ENCODE measurements at regions of chr5 and their contacts with region 1.

Region 1: DNA sequence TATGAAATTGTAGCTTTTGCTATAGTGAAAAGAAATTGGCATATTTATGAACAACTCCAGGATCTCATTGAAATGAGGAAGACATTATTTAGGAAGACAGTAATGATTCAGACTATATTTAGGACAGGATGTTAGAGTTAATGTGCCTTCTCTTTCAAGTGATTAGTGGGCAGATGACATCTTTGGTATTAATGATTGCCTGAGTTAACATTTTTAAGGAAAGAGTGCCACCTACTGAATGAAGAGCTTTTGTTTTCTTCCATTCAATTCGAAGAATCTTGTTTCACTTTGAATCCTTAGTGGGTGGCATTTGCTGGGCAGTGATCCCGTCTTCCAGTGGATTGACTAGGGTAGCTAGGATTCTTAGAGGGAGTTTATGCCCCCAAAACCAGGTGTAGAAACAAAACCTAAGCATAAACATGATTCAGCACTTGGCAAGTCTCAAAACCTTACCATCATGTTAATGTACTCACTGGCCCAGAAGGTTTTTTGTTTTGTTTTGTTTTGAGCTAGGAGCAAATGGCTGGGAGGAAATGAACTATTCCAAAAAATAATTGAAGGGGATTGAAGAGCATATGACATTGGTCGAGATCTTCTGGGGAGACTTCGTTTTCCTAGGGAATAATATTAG is 23.2 kb downstream of the MAP3K1 start:
- DNase-seq: peak in 1 of 2 donors; percentile 77
- ATAC-seq: peak; percentile 76 to 84 (median 76)
- H3K4me3 ChIP-seq: no peak overlapping the region
- H3K4me3 Mint-ChIP-seq: peak overlapping the region; percentile 14
- H3K27ac ChIP-seq: peak overlapping the region; percentile 41
- H3K27ac Mint-ChIP-seq: peak overlapping the region; percentile 88 to 91
- H3K4me1 ChIP-seq: peaks cover 10% of the 10 kb centered on the region
- H3K4me1 Mint-ChIP-seq: peaks cover 71 to 89% of the 10 kb centered on the region in 2 donors
- H3K27me3 ChIP-seq: no peaks in the 10 kb centered on the region
- H3K27me3 Mint-ChIP-seq: no peaks in the 10 kb centered on the region
- CTCF ChIP-seq: peak; percentile 63

Region 2: DNA sequence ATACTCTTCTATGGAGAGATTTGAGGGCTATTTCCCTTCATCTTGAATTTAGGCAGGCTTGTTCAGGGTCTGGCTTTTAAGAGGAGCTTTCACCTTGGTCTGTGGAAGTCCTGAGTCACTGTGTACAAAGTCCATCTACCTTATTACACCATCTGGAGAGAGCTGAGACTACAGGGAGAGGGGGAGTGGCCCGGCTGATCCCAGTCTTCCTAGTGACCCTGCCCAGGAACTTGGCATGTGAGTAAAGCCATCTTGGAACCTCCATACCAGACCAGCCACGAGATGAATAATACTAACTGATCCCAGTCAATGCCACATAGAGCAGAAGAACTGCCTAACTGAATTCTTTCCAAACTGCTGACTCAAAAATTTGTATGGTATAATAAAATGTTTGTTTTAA is 835.3 kb before region 1 on chr5:
- intact Hi-C with region 1: no loop called
- DNase-seq: no peak
- ATAC-seq: no peak
- H3K4me3 ChIP-seq: no peak overlapping the region
- H3K4me3 Mint-ChIP-seq: no peak overlapping the region
- H3K27ac ChIP-seq: no peak overlapping the region
- H3K27ac Mint-ChIP-seq: no peak overlapping the region
- H3K4me1 ChIP-seq: no peaks in the 10 kb centered on the region
- H3K4me1 Mint-ChIP-seq: no peaks in the 10 kb centered on the region
- H3K27me3 ChIP-seq: no peaks in the 10 kb centered on the region
- H3K27me3 Mint-ChIP-seq: peaks cover 0 to 8% of the 10 kb centered on the region in 2 donors
- CTCF ChIP-seq: no peak

Region 3: GRCh38 chr5:56270568-56271392 is 567.7 kb before region 1 on chr5:
- intact Hi-C with region 1: loop called (anchors 1 kb)
- DNase-seq: peak; percentile 45 to 86
- ATAC-seq: peak; percentile 93 to 99 (median 98)
- H3K4me3 ChIP-seq: no peak overlapping the region
- H3K4me3 Mint-ChIP-seq: no peak overlapping the region
- H3K27ac ChIP-seq: no peak overlapping the region
- H3K27ac Mint-ChIP-seq: no peak overlapping the region
- H3K4me1 ChIP-seq: no peaks in the 10 kb centered on the region
- H3K4me1 Mint-ChIP-seq: no peaks in the 10 kb centered on the region
- H3K27me3 ChIP-seq: no peaks in the 10 kb centered on the region
- H3K27me3 Mint-ChIP-seq: peaks cover 7 to 19% of the 10 kb centered on the region in 2 donors
- CTCF ChIP-seq: peak; percentile 72